ENCODE measurements at regions of chr16 and their contacts with region 1.

Region 1: GRCh38 chr16:15777533-15778203 is 79.2 kb downstream of the MYH11 start:
- DNase-seq: peak; percentile 33
- ATAC-seq: peak; percentile 53
- H3K4me3 Mint-ChIP-seq: no peak overlapping the region
- H3K27ac Mint-ChIP-seq: no peak overlapping the region
- H3K4me1 Mint-ChIP-seq: no peaks in the 10 kb centered on the region
- H3K27me3 Mint-ChIP-seq: peaks cover 8% of the 10 kb centered on the region

Region 2: DNA sequence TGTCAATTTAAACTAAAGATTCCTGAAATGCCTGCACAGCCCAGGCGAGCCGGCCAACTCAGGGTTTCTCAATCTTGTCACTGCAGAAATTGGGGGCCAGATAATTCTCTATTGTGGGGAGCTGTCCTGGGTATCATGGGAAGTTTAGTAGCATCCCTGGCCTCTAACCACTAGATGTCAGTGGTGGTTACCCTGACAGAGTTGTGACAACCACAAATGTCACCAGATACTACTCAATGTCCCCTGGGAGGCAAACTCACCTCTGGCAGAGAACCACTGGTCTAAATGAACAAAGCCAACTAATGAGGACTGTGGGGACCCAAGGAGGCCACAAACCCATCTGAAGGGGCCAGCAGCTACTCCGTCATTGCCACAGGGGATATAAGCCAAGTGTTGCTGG is 11.8 kb before region 1 on chr16:
- CTCF ChIA-PET with region 1: interaction called, 11 read pairs
- POLR2A ChIA-PET with region 1: no interaction called
- DNase-seq: peak; percentile 60
- ATAC-seq: peak; percentile 79
- H3K4me3 Mint-ChIP-seq: no peak overlapping the region
- H3K27ac Mint-ChIP-seq: no peak overlapping the region
- H3K4me1 Mint-ChIP-seq: peaks cover 3% of the 10 kb centered on the region
- H3K27me3 Mint-ChIP-seq: peaks cover 7% of the 10 kb centered on the region

Region 3: DNA sequence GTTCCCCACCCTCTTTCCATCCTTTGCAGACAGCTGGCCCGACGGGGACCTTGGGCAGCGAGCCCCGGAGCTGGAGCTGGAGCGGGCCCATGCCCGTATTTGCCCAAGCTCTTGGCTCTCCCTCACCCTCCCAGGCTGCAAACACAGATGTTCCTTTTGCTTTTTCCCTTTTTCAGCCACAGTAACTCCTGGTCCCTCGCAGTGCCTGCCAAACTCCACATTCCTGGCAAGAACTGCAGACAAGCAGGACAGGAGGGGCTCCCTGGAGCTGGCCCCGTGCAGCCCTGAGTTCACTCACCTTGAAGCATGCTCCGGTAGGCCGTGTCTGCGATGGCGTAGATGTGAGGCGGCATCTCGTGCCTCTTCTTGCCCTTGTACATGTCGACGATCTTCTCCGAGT is 45.3 kb after region 1 on chr16:
- CTCF ChIA-PET with region 1: interaction called, 12 read pairs
- POLR2A ChIA-PET with region 1: no interaction called
- DNase-seq: no peak
- ATAC-seq: no peak
- H3K4me3 Mint-ChIP-seq: no peak overlapping the region
- H3K27ac Mint-ChIP-seq: no peak overlapping the region
- H3K4me1 Mint-ChIP-seq: no peaks in the 10 kb centered on the region
- H3K27me3 Mint-ChIP-seq: peaks cover 6% of the 10 kb centered on the region

Measured in activated CD8-positive, alpha-beta T cell treated with anti-CD3 and anti-CD28 coated beads, Interleukin-2, amount 10 ng/mL, durations not matched to agents 7 days and 5 days (primary cell).